ENCODE measurements at regions of chr2 and their contacts with region 1.

Region 1: DNA sequence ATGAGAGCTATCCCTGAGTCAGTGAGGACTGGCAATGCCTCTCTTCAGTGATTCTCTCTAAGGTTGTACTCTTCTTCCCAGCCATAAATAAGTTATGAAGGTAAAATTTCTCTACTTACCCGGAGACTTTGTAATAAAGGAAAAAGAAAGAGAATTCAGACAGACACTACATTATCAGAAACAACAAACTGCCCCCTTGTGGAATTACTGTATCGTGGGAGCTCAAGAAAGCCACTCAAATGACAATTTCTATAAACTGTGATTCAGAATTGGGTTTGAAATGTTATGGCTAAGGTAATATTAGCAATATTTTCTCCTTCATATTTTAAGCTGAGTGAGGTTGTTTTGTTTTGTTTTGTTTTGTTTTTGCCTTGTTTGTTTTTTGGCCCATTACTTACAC is 155.8 kb upstream of the TANK start:
- DNase-seq: no peak
- H3K4me3 Mint-ChIP-seq: no peak overlapping the region
- H3K27ac Mint-ChIP-seq: no peak overlapping the region
- H3K4me1 Mint-ChIP-seq: no peaks in the 10 kb centered on the region
- H3K27me3 Mint-ChIP-seq: peaks cover 8% of the 10 kb centered on the region

Region 2: GRCh38 chr2:160994141-160995002 is 10.0 kb before region 1 on chr2:
- CTCF ChIA-PET with region 1: interaction called, 18 read pairs
- POLR2A ChIA-PET with region 1: no interaction called
- DNase-seq: peak; percentile 87
- H3K4me3 Mint-ChIP-seq: no peak overlapping the region
- H3K27ac Mint-ChIP-seq: no peak overlapping the region
- H3K4me1 Mint-ChIP-seq: peaks cover 9% of the 10 kb centered on the region
- H3K27me3 Mint-ChIP-seq: no peaks in the 10 kb centered on the region